Activated CD8-positive, alpha-beta T cell treated with anti-CD3 and anti-CD28 coated beads for 36 hours (primary cell): ENCODE measurements at regions of chr11 and their contacts with region 1.

Region 1: GRCh38 chr11:72598906-72599305 is 75.3 kb downstream of the PDE2A start:
- DNase-seq: no peak
- ATAC-seq: no peak
- H3K4me3 Mint-ChIP-seq: no peak overlapping the region
- H3K27ac Mint-ChIP-seq: no peak overlapping the region
- H3K4me1 Mint-ChIP-seq: no peaks in the 10 kb centered on the region
- H3K27me3 Mint-ChIP-seq: no peaks in the 10 kb centered on the region
- CTCF ChIP-seq: no peak

Region 2: DNA sequence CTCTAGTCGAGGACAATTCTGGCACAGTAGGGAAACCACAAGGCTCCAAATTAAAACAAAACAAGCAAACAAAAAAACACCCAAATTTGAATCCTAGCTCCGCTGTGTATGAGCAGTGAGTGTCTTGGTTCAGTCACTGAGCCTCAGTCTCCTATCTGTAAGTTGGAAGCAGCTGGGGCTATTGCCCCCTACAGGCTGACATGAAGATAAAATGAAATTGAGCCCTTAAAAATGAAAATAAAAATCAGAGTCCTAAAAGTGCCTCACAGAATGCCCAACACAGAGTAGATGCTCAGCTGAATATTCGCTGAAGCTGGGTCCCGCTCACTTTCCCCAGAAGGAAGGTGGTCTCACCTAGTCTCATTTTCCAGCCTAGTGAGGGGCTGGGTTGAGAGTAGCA is 10.1 kb after region 1 on chr11:
- CTCF ChIA-PET with region 1: interaction called, 138 read pairs
- POLR2A ChIA-PET with region 1: no interaction called
- intact Hi-C with region 1: no loop called
- DNase-seq: peak; percentile 28
- ATAC-seq: peak; percentile 68
- H3K4me3 Mint-ChIP-seq: no peak overlapping the region
- H3K27ac Mint-ChIP-seq: no peak overlapping the region
- H3K4me1 Mint-ChIP-seq: peaks cover 3% of the 10 kb centered on the region
- H3K27me3 Mint-ChIP-seq: peaks cover 15% of the 10 kb centered on the region
- CTCF ChIP-seq: peak; percentile 53

Region 3: DNA sequence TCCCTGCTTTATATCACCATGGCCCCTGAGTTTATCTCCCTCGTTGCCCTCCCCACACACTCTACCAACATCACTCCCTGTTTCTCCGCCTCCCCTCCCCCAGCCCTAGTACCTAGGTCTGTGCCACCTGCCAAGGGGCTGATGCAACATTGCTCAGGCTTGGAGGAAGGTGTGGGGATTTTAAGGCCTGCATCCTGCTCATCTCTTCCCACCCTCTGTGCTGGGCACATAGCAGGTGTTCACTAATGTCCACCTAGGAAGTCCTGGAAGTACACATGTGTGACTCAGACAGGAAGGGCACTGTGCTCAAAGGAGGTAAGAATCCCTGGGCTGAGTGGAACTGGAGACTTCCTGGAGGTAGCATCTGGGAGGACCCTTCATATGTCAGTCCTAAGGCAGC is 38.3 kb after region 1 on chr11:
- CTCF ChIA-PET with region 1: no interaction called
- POLR2A ChIA-PET with region 1: no interaction called
- intact Hi-C with region 1: no loop called
- DNase-seq: no peak
- ATAC-seq: no peak
- H3K4me3 Mint-ChIP-seq: no peak overlapping the region
- H3K27ac Mint-ChIP-seq: no peak overlapping the region
- H3K4me1 Mint-ChIP-seq: no peaks in the 10 kb centered on the region
- H3K27me3 Mint-ChIP-seq: peaks cover 3% of the 10 kb centered on the region
- CTCF ChIP-seq: no peak